ENCODE measurements at regions of chr16 and their contacts with region 1.

Region 1: DNA sequence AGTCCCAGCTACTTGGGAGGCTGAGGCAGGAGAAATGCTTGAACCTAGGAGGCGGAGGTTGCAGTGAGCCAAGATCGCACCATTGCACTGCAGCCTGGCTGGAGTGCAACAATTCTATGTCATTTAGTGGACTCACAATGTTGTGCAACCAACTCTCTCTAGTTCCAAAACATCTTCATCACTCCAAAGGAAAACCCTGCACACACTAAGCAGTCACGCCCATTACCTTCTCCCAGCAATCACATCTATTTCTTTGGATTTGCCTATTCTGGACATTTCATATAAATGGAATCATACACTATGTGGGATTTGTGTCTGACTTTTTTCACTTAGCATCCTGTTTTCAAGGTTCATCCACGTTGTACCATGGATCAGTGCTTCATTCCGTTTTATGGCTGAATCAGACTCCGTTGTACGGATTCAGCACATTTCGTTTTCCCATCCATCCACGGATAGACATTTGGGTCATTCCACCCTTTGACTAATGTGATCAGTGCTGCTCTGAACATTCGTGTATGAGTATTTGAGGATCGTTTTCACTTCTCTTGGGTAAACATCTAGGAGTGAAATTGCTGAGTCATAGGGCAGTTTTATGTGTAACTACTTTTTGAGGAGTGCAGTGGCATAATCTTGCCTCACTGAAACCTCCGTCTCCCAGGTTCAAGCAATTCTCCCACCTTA is 45.3 kb upstream of the EMP2 start:
- DNase-seq: no peak
- ATAC-seq: no peak
- H3K4me3 ChIP-seq: no peak overlapping the region
- H3K27ac ChIP-seq: no peak overlapping the region
- H3K4me1 ChIP-seq: peaks cover 0 to 10% (median 0%) of the 10 kb centered on the region in 12 donors
- H3K27me3 ChIP-seq: no peaks in the 10 kb centered on the region
- CTCF ChIP-seq: no peak
- POLR2A ChIP-seq: no peak

Region 2: GRCh38 chr16:10521681-10522274 is 104.0 kb before region 1 on chr16:
- intact Hi-C with region 1: loop called in 1 of 10 experiments (anchors 10 kb)
- DNase-seq: peak in 4 of 5 donors; percentile 48 to 60 (median 55)
- ATAC-seq: peak; percentile 57 to 87 (median 70)
- H3K4me3 ChIP-seq: no peak overlapping the region
- H3K27ac ChIP-seq: no peak overlapping the region
- H3K4me1 ChIP-seq: no peaks in the 10 kb centered on the region
- H3K27me3 ChIP-seq: no peaks in the 10 kb centered on the region
- CTCF ChIP-seq: peak; percentile 64 to 93 (median 80)
- POLR2A ChIP-seq: no peak

Region 3: DNA sequence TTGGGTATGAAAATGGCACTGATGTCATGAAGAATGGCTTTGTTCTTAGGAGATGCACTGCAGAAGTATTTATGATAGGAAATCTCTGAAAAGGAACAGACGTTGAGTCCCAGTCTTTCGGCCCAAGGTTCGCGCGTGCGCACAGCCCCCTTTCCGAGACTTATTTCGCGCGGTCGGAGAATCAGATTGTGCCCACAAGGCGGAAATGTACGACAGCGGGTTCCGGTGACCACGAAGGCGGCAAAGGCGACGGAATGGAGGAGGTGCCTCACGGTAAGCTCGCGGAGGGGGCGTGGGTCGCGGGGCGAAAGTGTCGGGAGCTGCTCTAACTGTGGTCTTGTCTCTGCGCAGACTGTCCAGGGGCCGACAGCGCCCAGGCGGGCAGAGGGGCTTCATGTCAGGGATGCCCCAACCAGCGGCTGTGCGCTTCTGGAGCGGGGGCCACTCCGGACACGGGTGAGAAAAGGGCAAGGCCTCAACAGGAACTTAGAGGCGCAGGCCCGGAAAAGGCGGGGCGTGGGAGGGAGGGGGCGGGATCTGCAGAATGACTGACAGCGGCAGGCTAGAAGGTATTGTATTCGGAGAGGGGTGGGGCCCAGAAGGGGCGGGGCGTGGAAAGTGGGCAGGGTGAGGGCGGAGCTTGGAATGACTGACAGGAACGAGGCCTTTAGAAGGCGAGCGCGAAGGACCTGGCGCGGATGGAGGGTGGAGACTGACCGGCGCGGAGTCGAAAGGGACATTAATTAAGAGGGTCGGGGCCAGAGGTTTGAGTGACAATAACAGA is 118.1 kb after region 1 on chr16 and contains the start of gene NUBP1:
- intact Hi-C with region 1: no loop called
- DNase-seq: peak; percentile 99
- ATAC-seq: peak; percentile 96 to 97 (median 97)
- H3K4me3 ChIP-seq: peak within 1 kb of the TSS; percentile 18 to 82 (median 64)
- H3K27ac ChIP-seq: peak within 1 kb of the TSS; percentile 95 to 100 (median 98)
- H3K4me1 ChIP-seq: peaks cover 5 to 43% (median 28%) of the 10 kb centered on the region in 12 donors
- H3K27me3 ChIP-seq: no peaks in the 10 kb centered on the region
- CTCF ChIP-seq: peak in 1 of 12 donors; percentile 7
- POLR2A ChIP-seq: peak; percentile 93 to 98
- total RNA-seq, gene NUBP1: 34.0 to 54.8 (median 47.9) TPM

Region 4: DNA sequence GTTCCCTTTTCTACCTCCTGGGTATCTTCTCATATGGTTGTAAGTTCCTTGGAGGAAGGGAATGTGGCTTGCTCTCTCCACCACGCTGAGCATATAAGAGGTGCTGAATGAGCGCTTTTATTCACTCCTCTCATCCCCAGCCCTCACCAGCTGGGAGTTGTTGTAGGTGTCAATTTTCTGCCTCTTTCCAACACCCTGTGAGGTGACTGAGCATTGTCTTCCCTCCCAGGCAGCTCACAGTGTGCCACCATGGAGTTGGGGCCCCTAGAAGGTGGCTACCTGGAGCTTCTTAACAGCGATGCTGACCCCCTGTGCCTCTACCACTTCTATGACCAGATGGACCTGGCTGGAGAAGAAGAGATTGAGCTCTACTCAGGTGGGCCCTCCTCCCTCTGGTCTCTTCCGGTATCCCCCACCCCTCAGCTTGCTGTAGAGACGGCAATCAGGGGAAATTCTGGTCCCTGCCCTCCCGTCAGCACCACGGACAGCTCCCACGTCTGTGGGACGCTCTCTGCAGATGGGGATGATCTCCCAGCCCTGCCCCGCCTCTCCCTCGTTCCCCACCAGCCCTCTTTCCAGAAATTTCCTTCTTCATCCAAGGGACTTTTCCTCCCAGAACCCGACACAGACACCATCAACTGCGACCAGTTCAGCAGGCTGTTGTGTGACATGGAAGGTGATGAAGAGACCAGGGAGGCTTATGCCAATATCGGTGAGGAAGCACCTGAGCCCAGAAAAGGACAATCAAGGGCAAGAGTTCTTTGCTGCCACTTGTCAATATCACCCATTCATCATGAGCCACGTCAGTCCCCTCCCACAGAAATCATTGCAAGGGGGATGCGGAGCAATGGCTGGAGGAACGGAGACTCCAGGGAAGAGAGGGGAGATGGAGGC is 269.6 kb after region 1 on chr16:
- intact Hi-C with region 1: no loop called
- DNase-seq: peak in 3 of 5 donors; percentile 48 to 60 (median 55)
- ATAC-seq: peak in 3 of 4 donors; percentile 47 to 71 (median 53)
- H3K4me3 ChIP-seq: no peak overlapping the region
- H3K27ac ChIP-seq: peak overlapping the region in 1 of 12 donors; percentile 73
- H3K4me1 ChIP-seq: peaks cover 0 to 74% (median 0%) of the 10 kb centered on the region in 12 donors
- H3K27me3 ChIP-seq: no peaks in the 10 kb centered on the region
- CTCF ChIP-seq: no peak
- POLR2A ChIP-seq: no peak